ENCODE measurements at regions of chr4 and their contacts with region 1.

Region 1: DNA sequence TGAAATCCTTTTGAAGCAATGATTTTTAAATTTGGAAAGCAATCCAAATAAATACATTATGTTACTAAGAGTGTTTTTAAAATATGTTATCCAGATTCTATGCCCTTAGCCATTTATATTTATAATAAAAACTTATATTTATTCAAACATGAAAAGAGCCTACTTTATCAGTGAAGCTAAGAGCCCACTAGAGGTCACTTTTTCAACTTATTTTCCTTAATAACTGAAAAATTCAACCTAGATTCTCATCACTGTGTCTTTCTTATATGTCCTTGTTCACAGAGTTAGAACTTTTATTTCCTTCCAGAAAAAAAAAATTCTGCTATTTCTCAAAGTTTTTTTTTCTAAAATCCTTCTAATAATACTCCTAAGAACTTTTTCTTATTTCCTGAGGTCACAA is 23.9 kb downstream of the PRDM8 start:
- DNase-seq: no peak
- H3K4me3 ChIP-seq: no peak overlapping the region
- CTCF ChIP-seq: peak; percentile 26

Region 2: DNA sequence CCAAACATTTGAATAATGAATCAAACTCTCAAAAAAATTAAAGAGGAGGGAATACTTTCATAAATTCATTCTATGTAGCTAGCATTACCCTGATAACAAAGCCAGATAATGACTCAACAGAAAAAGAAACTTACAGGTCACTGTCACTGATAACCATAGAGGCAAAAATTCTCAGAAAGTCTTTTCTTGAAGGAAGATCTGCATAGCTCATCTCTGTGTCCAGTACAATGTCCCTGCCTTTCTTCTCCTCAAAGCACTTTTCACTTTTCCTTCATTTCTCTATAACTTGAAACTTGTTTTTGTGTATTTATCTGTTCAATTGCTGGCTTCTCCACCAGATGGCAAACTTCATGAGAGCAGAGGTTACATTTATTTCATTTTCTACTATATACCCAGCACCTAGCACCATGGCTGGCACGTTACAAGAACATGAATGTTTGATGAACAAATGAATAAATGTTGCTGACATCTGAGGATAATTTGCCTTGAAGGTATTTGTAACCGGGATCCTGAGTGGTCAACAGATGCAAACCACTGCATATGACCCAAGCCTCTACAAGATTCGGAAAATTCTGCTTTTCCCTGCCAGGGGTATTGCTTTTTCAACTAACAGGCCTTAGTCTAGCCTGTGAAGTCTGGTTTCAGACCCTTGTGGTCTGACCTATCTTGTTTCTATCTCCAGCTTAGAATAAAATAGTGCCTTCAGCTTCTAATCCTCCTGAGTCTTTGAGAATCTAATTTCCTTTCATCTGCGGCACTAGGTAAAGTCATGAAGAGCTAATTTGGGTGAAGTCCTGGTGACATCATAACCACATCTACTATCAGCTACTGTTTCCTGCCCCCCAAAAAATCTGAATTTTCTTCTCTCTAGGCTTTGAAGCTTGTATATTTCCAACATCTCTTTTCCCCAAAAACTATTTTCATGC is 95.6 kb before region 1 on chr4:
- CTCF ChIA-PET with region 1: interaction called, 18 read pairs
- POLR2A ChIA-PET with region 1: no interaction called
- DNase-seq: no peak
- H3K4me3 ChIP-seq: no peak overlapping the region
- CTCF ChIP-seq: peak; percentile 42

Region 3: DNA sequence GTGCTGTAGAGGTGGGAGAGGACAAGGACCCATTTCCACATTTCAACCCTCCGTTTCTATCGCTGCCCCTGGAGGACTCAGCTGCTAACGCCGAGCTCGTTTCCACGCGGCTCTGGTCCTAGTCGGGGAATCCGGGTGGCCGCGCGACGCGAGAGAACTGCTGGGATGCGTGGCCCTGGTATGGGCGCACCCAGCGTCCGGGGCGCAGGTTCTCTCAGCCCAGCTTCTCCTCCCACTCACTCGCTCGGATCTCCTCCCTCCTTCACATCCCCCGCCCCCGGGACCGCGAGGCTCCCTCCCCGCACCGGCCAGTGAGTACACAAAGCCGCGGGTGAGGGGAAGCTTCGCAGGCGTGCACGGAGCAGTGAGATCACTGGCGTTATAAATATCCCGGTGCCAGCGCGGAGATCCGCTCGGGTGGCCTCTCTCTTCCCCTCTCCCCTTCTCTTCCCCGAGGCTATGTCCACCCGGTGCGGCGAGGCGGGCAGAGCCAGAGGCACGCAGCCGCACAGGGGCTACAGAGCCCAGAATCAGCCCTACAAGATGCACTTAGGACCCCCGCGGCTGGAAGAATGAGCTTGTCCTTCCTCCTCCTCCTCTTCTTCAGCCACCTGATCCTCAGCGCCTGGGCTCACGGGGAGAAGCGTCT is 45.2 kb after region 1 on chr4 and contains the start of gene FGF5:
- CTCF ChIA-PET with region 1: interaction called, 16 read pairs
- POLR2A ChIA-PET with region 1: interaction called, 9 read pairs
- DNase-seq: peak; percentile 75
- H3K4me3 ChIP-seq: peak within 1 kb of the TSS; percentile 92
- CTCF ChIP-seq: no peak

Region 4: GRCh38 chr4:80313627-80314026 is 92.5 kb after region 1 on chr4:
- CTCF ChIA-PET with region 1: interaction called, 116 read pairs
- POLR2A ChIA-PET with region 1: no interaction called
- DNase-seq: no peak
- H3K4me3 ChIP-seq: no peak overlapping the region
- CTCF ChIP-seq: no peak

Region 5: GRCh38 chr4:80335554-80336358 is 114.6 kb after region 1 on chr4 and contains the start of gene CFAP299:
- CTCF ChIA-PET with region 1: interaction called, 116 read pairs
- POLR2A ChIA-PET with region 1: no interaction called
- DNase-seq: no peak
- H3K4me3 ChIP-seq: peak within 1 kb of the TSS; percentile 81
- CTCF ChIP-seq: peak; percentile 75